Adrenal gland (tissue), 19 donors: ENCODE measurements at regions of chr3 and their contacts with region 1.

Region 1: GRCh38 chr3:170689893-170690660 is 104.2 kb upstream of the SLC7A14 start:
- DNase-seq: peak; percentile 46 to 84 (median 73)
- H3K4me3 ChIP-seq: no peak overlapping the region
- H3K27ac ChIP-seq: no peak overlapping the region
- H3K4me1 ChIP-seq: no peaks in the 10 kb centered on the region
- H3K27me3 ChIP-seq: no peaks in the 10 kb centered on the region
- CTCF ChIP-seq: peak; percentile 57 to 86 (median 69)
- POLR2A ChIP-seq: no peak

Region 2: DNA sequence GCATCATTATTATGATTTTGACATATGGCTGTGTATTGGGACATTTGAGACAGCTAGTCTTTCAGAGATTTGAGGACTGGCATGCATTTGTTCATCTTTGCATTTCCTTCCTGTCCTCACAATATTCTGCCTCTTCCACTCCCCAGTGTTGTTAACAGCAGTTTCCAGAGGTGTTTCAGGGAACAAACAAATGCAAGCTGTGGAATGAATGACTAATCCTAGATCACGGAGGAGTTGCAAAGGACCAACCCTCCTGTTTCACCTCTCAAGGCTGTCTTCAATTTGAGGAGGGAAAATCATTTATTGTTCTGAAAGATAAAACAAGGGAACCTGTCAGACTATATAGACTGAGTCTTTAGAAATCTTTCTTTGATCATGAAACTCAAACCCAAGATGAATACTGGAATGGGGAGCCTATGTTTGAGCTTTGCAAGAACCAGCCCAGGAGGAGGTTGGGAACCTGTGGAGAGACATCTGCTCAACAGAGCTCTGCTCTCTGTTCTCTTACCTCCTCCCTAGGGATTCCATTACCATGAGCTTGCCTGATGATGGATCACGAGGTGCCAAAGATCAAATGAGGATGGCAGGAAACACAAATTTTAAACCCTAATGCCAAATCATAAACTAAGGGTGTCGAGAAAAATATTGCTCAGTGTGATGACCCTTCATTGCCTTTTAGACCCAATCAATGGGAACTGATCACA is 172.7 kb before region 1 on chr3:
- intact Hi-C with region 1: loop called in 1 of 2 experiments (anchors 10 kb)
- DNase-seq: no peak
- H3K4me3 ChIP-seq: no peak overlapping the region
- H3K27ac ChIP-seq: no peak overlapping the region
- H3K4me1 ChIP-seq: no peaks in the 10 kb centered on the region
- H3K27me3 ChIP-seq: no peaks in the 10 kb centered on the region
- CTCF ChIP-seq: no peak
- POLR2A ChIP-seq: no peak